Activated naive CD4-positive, alpha-beta T cell treated with anti-CD3 and anti-CD28 coated beads for 36 hours (primary cell): ENCODE measurements at regions of chr7 and their contacts with region 1.

Region 1: DNA sequence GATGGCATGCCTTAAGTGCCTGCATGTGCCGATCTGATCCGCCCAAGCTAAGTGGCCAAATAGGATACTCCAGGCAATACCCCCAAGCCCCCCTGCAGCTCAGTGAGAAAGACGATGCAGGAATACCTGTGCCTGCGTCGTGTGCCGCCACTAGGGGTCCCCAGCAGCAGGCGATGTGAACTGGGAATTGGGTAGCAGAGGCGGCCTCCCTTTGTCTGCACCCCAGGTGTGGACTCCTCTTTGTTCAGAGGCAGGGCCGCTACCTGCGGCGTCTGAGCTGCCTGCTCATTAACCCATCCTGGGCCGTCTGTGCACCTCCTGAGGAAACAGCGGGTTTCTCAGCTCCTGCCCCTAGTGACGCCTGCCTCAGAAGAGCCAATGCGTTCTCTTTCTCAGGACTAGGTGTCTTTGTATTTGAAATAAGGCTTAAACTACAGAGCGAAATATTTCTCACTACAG is 4.8 kb upstream of the CHN2 start:
- DNase-seq: peak; percentile 63
- H3K4me3 Mint-ChIP-seq: no peak overlapping the region
- H3K27ac Mint-ChIP-seq: no peak overlapping the region
- H3K4me1 Mint-ChIP-seq: peaks cover 4% of the 10 kb centered on the region
- H3K27me3 Mint-ChIP-seq: peaks cover 30% of the 10 kb centered on the region

Region 2: GRCh38 chr7:29084832-29085231 is 104.9 kb before region 1 on chr7:
- CTCF ChIA-PET with region 1: no interaction called
- intact Hi-C with region 1: no loop called
- DNase-seq: no peak
- H3K4me3 Mint-ChIP-seq: no peak overlapping the region
- H3K27ac Mint-ChIP-seq: no peak overlapping the region
- H3K4me1 Mint-ChIP-seq: peaks cover 4% of the 10 kb centered on the region
- H3K27me3 Mint-ChIP-seq: peaks cover 3% of the 10 kb centered on the region

Region 3: GRCh38 chr7:29207162-29207801 is 17.5 kb after region 1 on chr7:
- CTCF ChIA-PET with region 1: interaction called, 12 read pairs
- intact Hi-C with region 1: no loop called
- DNase-seq: no peak
- H3K4me3 Mint-ChIP-seq: no peak overlapping the region
- H3K27ac Mint-ChIP-seq: no peak overlapping the region
- H3K4me1 Mint-ChIP-seq: peaks cover 4% of the 10 kb centered on the region
- H3K27me3 Mint-ChIP-seq: no peaks in the 10 kb centered on the region

Region 4: DNA sequence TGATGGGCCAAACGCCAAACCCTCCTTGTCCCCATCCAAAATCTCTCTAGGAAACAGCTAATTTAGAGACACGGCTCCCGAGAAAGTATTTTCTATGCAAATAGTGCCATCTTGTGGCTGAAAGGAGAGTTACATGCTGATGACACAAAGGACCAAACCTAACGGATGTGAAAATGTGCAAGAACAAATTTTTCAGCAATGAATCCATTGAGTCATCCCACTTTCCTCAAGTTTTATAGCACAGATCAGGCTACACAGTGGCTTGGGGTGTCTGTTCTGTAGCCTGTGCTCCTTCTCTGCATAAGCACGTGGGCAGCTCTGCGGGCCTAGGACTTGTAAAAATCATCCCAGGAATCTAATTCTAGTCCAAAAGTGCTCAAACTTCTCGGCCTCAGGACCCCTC is 219.1 kb after region 1 on chr7:
- CTCF ChIA-PET with region 1: interaction called, 15 read pairs
- intact Hi-C with region 1: loop called (anchors 1 kb)
- DNase-seq: peak; percentile 70
- H3K4me3 Mint-ChIP-seq: no peak overlapping the region
- H3K27ac Mint-ChIP-seq: no peak overlapping the region
- H3K4me1 Mint-ChIP-seq: no peaks in the 10 kb centered on the region
- H3K27me3 Mint-ChIP-seq: no peaks in the 10 kb centered on the region